ENCODE measurements at regions of chr11 and their contacts with region 1.

Region 1: DNA sequence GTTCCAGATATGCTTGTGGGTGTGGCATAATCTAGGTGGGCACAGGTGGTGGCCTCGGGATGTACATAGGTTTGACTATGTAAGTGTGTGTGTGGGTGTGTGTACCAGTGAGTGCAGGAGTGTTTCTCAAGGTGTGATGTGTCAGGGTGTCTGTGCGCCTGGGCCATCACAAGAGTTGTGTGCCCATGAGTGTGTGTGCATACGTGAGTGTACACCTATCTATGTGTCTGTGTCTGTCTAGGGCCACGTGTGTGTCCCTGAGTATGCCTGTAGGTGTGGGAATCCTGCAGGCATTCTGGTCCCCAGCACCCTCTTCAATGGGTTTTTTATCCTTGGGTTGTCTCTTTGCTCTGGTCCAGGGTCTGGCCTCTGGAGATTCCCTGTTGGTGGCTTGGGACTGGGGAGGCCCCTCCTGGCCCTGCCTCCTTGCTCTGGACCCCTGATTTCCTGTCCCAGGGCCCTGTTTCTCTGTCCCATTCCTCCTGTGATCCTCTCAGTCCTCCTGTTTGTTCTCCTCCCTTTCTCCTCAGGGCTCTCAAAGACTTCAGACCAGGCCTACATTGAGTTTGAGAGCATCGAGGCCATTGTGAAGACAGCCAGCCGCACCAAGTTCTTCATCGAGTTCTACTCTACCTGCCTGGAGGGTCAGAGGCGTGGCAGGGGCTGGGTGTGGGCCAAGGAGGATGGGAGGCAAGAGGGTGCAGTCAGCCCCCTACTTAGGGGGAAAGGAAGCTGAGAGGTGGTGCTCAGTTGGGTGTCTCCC is 9.4 kb downstream of the INPPL1 start:
- DNase-seq: peak in 1 of 35 experiments; percentile 12
- ATAC-seq: no peak
- H3K4me3 ChIP-seq: no peak overlapping the region
- H3K4me3 Mint-ChIP-seq: no peak overlapping the region
- H3K27ac ChIP-seq: no peak overlapping the region
- H3K27ac Mint-ChIP-seq: peak overlapping the region; percentile 5 to 25
- H3K4me1 ChIP-seq: no peaks in the 10 kb centered on the region
- H3K4me1 Mint-ChIP-seq: peaks cover 2 to 5% (median 5%) of the 10 kb centered on the region in 3 donors
- H3K27me3 ChIP-seq: peaks cover 0 to 5% of the 10 kb centered on the region in 2 experiments
- H3K27me3 Mint-ChIP-seq: peaks cover 0 to 3% of the 10 kb centered on the region in 2 donors

Region 2: GRCh38 chr11:71986131-71986530 is 247.8 kb before region 1 on chr11:
- CTCF ChIA-PET with region 1: no interaction called
- POLR2A ChIA-PET with region 1: interaction called in 1 of 2 experiments, 10 read pairs
- DNase-seq: no peak
- ATAC-seq: no peak
- H3K4me3 ChIP-seq: no peak overlapping the region
- H3K4me3 Mint-ChIP-seq: no peak overlapping the region
- H3K27ac ChIP-seq: no peak overlapping the region
- H3K27ac Mint-ChIP-seq: no peak overlapping the region
- H3K4me1 ChIP-seq: no peaks in the 10 kb centered on the region
- H3K4me1 Mint-ChIP-seq: peaks cover 0 to 6% (median 0%) of the 10 kb centered on the region in 3 donors
- H3K27me3 ChIP-seq: no peaks in the 10 kb centered on the region
- H3K27me3 Mint-ChIP-seq: no peaks in the 10 kb centered on the region

Region 3: GRCh38 chr11:72222907-72223614 is 10.9 kb before region 1 on chr11:
- CTCF ChIA-PET with region 1: interaction called in 1 of 2 experiments, 10 read pairs
- POLR2A ChIA-PET with region 1: interaction called in 1 of 2 experiments, 5 read pairs
- DNase-seq: peak; percentile 81 to 96 (median 90)
- ATAC-seq: peak; percentile 80 to 83 (median 82)
- H3K4me3 ChIP-seq: peak overlapping the region; percentile 84 to 92
- H3K4me3 Mint-ChIP-seq: peak overlapping the region; percentile 88 to 93 (median 88)
- H3K27ac ChIP-seq: peak overlapping the region; percentile 78
- H3K27ac Mint-ChIP-seq: peak overlapping the region; percentile 95
- H3K4me1 ChIP-seq: peaks cover 4 to 37% of the 10 kb centered on the region in 2 experiments
- H3K4me1 Mint-ChIP-seq: peaks cover 28 to 39% (median 33%) of the 10 kb centered on the region in 3 donors
- H3K27me3 ChIP-seq: peaks cover 0 to 9% of the 10 kb centered on the region in 2 experiments
- H3K27me3 Mint-ChIP-seq: peaks cover 3 to 4% of the 10 kb centered on the region in 2 donors

Measured in T-cell (primary cell).